Activated CD4-positive, alpha-beta memory T cell treated with anti-CD3 and anti-CD28 coated beads for 36 hours (primary cell): ENCODE measurements at regions of chr15 and their contacts with region 1.

Region 1: DNA sequence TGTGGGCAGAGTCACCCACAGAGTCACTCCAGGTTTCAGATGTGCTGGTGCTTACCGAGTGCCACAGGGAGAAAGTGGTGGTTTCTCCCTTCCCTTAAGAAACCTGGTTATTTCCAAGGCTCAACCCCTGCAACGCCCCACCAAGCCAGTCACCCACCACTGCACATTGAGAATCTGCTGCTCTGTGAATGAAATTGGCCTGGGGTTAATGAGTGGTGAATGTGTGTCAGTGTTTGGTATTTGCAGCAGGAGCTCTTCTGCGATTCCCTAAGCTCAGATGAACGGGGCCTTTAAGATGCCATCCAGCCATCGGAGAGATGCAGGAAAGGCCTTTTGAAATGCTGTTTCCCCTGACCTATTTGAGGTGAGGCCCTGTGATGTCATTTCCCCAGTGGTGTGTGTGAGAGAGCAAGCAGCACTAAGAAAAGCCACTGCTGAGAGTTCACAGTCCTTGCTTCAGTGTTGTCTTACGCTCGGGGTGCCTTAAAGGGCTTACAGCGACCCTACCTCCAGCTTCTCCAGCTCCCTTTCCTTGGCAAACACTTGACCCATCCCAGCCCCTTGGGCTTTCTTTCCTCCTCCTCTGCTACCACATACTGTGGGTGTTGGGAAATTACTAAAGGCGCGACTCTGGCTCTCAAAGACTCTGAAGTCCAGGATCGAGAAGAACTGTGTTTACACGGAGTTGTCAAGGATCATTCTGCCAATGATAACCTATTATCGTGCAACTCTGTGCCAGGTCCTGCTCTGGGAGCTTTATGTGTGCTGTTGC is 68.9 kb downstream of the SMAD3 start:
- DNase-seq: peak; percentile 79
- H3K4me3 Mint-ChIP-seq: peak overlapping the region; percentile 82
- H3K27ac Mint-ChIP-seq: peak overlapping the region; percentile 95
- H3K4me1 Mint-ChIP-seq: peaks cover 92% of the 10 kb centered on the region
- H3K27me3 Mint-ChIP-seq: no peaks in the 10 kb centered on the region

Region 2: DNA sequence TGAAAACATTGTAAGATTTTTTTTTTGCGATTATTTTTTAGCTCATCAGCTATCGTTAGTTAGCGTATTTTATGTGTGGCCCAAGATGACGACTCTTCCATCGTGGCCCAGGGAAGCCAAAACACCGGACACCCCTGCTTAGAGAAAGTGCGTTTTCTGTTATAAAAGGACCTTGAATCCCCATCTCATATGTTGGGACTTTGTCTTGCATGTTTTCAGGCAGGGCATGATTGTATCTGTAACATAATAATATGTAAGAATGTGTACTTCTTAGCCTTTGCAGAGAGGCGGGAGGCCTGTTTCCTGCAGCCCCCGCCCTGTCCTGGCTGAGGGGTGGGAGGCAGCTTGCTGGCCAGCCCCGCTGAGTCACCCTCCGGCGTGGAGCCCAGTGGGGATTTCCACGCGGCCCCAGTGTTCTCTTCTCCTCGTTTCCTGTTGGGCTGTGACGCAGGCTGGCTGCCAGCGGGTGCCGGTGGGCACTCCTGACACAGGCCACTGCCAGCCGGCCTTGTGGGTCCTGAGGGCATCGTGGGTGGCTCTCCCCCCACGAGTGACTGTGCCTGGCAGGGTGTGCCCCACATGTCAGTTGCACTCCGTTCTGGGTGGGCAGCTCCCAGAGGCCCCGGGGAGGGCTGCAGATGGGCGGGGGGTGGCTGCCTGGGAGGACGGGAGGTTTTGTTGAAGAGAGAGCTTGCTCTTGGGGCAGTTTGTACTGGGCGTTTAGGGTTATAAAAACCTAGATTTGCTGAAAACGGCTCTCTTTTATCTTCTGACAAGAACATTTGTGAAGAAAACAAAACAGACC is 13.2 kb before region 1 on chr15:
- CTCF ChIA-PET with region 1: interaction called, 4 read pairs
- POLR2A ChIA-PET with region 1: interaction called, 26 read pairs
- intact Hi-C with region 1: loop called (anchors 1 kb)
- DNase-seq: peak; percentile 95
- H3K4me3 Mint-ChIP-seq: peak overlapping the region; percentile 75
- H3K27ac Mint-ChIP-seq: peak overlapping the region; percentile 95
- H3K4me1 Mint-ChIP-seq: peaks cover 89% of the 10 kb centered on the region
- H3K27me3 Mint-ChIP-seq: no peaks in the 10 kb centered on the region

Region 3: DNA sequence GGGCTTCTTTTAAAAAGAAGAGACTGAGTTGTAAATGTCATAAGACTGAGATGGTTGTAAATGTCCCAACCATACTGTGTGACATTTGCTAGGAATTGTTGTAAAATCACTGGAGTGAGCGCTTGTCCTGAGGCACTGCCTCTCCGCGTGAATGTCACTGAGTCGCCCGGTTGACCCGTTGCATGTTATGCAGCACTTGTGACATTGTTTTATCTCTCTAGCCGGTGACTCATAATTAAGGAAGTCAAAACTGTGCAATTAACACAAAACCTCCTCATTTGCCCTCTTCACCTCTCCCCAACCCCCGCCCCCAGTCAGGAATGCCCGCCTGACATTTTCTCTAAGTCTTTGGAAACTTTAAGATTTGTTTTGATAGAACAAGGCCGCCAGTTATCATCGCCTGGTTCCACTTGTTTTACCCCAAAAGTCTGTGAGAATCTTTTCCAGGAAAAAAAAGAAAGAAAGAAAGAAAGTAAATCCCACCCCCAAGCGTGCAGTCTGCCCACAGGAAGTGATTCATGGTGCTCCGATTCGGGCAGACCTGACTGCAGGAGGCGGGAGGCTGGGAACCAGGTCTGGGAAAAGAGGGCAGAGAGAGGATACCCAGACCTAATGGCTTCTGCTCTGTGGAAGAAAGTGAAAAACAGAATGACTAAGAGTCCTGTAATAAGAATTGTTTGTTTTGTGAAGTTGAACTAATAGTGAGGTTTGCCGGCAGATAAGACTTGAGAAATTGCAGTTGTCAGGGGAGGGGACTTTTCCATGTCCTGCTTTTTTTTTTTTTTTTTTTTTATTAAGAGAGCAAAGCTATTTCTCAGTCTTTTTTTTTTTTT is 16.0 kb after region 1 on chr15:
- CTCF ChIA-PET with region 1: interaction called, 6 read pairs
- POLR2A ChIA-PET with region 1: interaction called, 7 read pairs
- intact Hi-C with region 1: loop called (anchors 1 kb)
- DNase-seq: peak; percentile 76
- H3K4me3 Mint-ChIP-seq: peak overlapping the region; percentile 62
- H3K27ac Mint-ChIP-seq: peak overlapping the region; percentile 85
- H3K4me1 Mint-ChIP-seq: peaks cover 73% of the 10 kb centered on the region
- H3K27me3 Mint-ChIP-seq: no peaks in the 10 kb centered on the region

Region 4: GRCh38 chr15:67175643-67176071 is 41.4 kb after region 1 on chr15:
- CTCF ChIA-PET with region 1: no interaction called
- POLR2A ChIA-PET with region 1: interaction called, 3 read pairs
- intact Hi-C with region 1: loop called (anchors 5 kb)
- DNase-seq: peak; percentile 77
- H3K4me3 Mint-ChIP-seq: no peak overlapping the region
- H3K27ac Mint-ChIP-seq: peak overlapping the region; percentile 79
- H3K4me1 Mint-ChIP-seq: peaks cover 65% of the 10 kb centered on the region
- H3K27me3 Mint-ChIP-seq: no peaks in the 10 kb centered on the region